Tibial artery (tissue), 4 donors: ENCODE measurements at regions of chr3 and their contacts with region 1.

Region 1: DNA sequence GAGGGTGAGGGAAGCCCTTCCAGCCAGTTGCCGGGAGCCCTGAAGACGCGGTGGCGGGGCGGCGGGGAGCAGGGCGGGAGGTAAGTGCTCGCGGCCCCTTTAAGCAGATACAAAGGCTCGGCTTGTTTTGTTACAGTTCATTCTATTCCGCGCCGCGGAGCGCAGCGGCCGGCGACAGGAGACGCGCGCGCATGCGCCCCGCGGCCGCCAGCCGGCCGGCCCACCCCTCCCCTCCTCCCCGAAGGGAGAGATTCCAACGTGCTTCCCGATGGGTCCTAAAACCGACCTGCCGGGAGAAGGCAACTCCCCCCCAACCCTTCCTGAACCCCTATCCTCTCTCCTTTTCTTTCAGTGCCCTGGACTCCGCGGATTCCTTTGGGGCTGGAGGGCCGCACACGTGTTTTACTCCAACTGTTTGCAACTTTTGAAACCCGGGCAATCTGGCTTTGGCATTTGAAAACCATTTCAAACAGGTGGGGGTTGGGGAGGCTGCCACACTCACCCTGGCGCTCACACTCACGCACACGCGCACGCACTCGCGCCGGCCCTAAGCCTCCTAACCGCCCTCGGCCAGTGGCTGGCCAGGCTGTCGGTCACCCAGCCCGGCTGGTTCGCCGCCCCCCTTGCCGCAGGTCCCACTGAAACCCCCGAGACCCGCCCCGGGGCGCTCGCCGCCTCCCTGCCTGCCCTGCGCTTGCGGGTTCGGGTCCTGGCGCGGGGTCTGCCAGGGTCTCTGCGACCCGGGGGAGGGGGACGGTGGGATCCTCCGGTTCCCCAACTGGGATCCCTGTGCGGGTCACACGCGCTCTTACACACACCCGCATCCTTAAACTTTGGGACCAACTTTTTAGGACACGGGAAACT is at the start of gene MAGI1:
- DNase-seq: peak; percentile 90 to 95
- H3K4me3 ChIP-seq: peak within 1 kb of the TSS; percentile 75 to 79
- H3K27ac ChIP-seq: peak within 1 kb of the TSS; percentile 95
- H3K4me1 ChIP-seq: peaks cover 0 to 25% (median 12%) of the 10 kb centered on the region in 4 donors
- H3K27me3 ChIP-seq: no peaks in the 10 kb centered on the region
- CTCF ChIP-seq: no peak

Region 2: GRCh38 chr3:65785065-65785645 is 253.8 kb before region 1 on chr3:
- intact Hi-C with region 1: loop called (anchors 5 kb)
- DNase-seq: no peak
- H3K4me3 ChIP-seq: no peak overlapping the region
- H3K27ac ChIP-seq: peak overlapping the region; percentile 31 to 32
- H3K4me1 ChIP-seq: peaks cover 0 to 32% (median 12%) of the 10 kb centered on the region in 4 donors
- H3K27me3 ChIP-seq: no peaks in the 10 kb centered on the region
- CTCF ChIP-seq: peak; percentile 77 to 81

Region 3: DNA sequence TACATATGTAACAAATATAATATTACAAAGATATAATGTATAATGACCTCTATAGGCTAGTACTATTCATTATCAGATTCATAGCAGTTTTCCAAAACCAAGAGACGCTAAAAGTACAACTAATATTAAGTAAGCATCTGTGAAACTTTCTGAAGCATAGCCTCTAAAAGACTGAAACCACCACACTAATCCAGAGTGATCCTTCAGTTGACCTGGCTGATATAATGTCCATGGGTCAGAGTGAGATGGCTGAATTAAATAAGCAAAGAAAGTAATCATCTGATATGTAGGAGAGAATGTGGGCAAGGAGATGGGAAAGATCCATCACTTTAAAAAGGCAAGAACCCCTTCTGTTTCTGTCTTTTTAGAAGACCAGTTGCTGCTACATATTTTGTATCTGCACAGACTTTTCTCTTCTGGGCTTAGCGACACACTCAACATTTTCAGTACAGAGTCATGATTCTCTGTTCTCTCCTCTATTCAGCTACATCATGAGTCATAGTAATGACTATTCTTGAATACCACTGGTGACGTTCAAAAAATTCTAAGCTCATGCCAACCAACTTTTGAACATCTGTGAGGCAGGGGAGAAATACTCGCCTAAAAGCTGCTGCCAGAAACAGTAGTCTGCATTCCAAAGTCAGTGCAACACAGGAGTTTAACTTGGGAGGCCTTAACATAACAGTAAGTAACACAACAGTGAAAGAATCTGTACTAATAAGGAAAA is 149.8 kb before region 1 on chr3:
- intact Hi-C with region 1: loop called (anchors 5 kb)
- DNase-seq: peak in 1 of 2 donors; percentile 72
- H3K4me3 ChIP-seq: no peak overlapping the region
- H3K27ac ChIP-seq: peak overlapping the region; percentile 58 to 77
- H3K4me1 ChIP-seq: peaks cover 0 to 61% (median 22%) of the 10 kb centered on the region in 4 donors
- H3K27me3 ChIP-seq: no peaks in the 10 kb centered on the region
- CTCF ChIP-seq: no peak

Region 4: DNA sequence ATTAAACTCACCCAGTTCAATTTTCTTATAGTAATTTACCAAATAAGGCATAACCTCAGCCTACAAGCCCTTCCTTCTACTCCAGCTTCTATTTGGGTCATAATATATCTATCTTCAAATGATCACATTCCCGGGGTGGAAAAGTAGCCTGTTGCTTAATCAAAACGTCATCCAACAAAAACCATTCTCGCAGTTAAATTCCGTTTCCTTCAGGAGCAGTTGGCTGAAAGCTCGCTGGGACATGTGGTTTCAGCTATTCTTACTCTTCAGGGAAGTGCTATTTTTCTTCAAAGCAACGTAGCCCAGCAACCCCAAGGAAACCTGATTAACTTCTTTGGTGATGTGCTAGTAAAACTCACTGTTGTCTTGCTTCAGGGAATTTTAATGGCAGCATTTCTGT is 59.8 kb before region 1 on chr3:
- intact Hi-C with region 1: loop called (anchors 10 kb)
- DNase-seq: peak; percentile 39 to 75
- H3K4me3 ChIP-seq: no peak overlapping the region
- H3K27ac ChIP-seq: peak overlapping the region; percentile 62 to 68
- H3K4me1 ChIP-seq: peaks cover 0 to 42% (median 19%) of the 10 kb centered on the region in 4 donors
- H3K27me3 ChIP-seq: no peaks in the 10 kb centered on the region
- CTCF ChIP-seq: no peak

Region 5: GRCh38 chr3:66138336-66139313 is 99.7 kb after region 1 on chr3:
- intact Hi-C with region 1: loop called (anchors 10 kb)
- DNase-seq: peak; percentile 39 to 69
- H3K4me3 ChIP-seq: no peak overlapping the region
- H3K27ac ChIP-seq: no peak overlapping the region
- H3K4me1 ChIP-seq: peaks cover 0 to 7% (median 3%) of the 10 kb centered on the region in 4 donors
- H3K27me3 ChIP-seq: no peaks in the 10 kb centered on the region
- CTCF ChIP-seq: peak; percentile 83 to 87

Region 6: GRCh38 chr3:66593964-66594363 is 555.0 kb after region 1 on chr3:
- intact Hi-C with region 1: no loop called
- DNase-seq: no peak
- H3K4me3 ChIP-seq: no peak overlapping the region
- H3K27ac ChIP-seq: no peak overlapping the region
- H3K4me1 ChIP-seq: peaks cover 0 to 56% (median 30%) of the 10 kb centered on the region in 4 donors
- H3K27me3 ChIP-seq: no peaks in the 10 kb centered on the region
- CTCF ChIP-seq: no peak